Mammary epithelial cell (primary cell): ENCODE measurements at regions of chr20 and their contacts with region 1.

Region 1: DNA sequence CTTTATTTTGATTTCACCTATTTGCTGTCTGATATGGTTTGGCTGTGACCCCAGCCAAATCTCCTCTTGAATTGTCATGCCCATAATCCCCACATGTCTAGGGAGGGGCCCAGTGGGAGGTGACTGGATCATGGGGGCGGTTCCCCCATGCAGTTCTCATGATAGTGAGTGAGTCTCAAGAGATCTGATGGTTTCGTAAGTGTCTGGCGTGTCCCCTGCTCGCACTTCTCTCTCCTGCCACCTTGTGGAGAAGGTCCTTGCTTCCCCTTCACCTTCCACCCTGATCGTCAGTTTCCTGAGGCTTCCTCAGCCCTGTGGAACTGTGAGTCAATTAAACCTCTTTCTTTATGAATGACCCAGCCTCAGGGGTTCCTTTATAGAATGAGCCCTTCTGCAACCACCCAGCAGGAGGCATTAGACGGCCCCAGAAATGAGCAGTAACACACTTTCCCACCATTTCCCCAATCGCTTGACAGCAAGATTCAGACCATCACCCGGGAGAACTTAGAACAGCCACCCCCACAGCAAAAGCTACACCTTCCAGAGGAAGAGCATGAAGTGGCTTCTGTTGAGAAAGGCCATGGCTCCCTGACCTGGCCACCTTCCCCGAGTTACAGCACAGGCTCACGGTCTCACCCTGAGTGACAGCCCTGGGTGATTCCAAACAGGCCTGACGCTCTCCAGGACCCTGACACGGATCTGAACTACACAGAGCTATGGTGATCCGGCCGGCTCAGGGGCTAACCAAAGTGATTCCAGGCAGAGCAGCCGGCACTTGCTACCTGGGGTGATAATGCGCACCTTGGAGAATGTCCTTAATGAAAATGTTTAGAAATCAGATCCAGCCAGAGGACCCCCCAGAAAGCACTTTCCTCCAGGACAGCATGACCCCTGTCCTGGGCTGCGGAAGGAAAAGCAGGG is 131.2 kb upstream of the CDH4 start:
- DNase-seq: peak; percentile 76
- H3K4me3 ChIP-seq: no peak overlapping the region
- H3K27ac ChIP-seq: no peak overlapping the region
- H3K4me1 ChIP-seq: no peaks in the 10 kb centered on the region
- H3K27me3 ChIP-seq: peaks cover under 1% of the 10 kb centered on the region
- CTCF ChIP-seq: peak; percentile 31 to 81

Region 2: GRCh38 chr20:60057123-60057801 is 1063.6 kb before region 1 on chr20:
- CTCF ChIA-PET with region 1: no interaction called
- dilution Hi-C with region 1: no loop called
- in situ Hi-C with region 1: no loop called
- intact Hi-C with region 1: loop called (anchors 1 kb)
- DNase-seq: peak; percentile 65
- H3K4me3 ChIP-seq: peak overlapping the region in 1 of 3 experiments; percentile 58
- H3K27ac ChIP-seq: no peak overlapping the region
- H3K4me1 ChIP-seq: peaks cover 63% of the 10 kb centered on the region
- H3K27me3 ChIP-seq: no peaks in the 10 kb centered on the region
- CTCF ChIP-seq: peak; percentile 90

Region 3: DNA sequence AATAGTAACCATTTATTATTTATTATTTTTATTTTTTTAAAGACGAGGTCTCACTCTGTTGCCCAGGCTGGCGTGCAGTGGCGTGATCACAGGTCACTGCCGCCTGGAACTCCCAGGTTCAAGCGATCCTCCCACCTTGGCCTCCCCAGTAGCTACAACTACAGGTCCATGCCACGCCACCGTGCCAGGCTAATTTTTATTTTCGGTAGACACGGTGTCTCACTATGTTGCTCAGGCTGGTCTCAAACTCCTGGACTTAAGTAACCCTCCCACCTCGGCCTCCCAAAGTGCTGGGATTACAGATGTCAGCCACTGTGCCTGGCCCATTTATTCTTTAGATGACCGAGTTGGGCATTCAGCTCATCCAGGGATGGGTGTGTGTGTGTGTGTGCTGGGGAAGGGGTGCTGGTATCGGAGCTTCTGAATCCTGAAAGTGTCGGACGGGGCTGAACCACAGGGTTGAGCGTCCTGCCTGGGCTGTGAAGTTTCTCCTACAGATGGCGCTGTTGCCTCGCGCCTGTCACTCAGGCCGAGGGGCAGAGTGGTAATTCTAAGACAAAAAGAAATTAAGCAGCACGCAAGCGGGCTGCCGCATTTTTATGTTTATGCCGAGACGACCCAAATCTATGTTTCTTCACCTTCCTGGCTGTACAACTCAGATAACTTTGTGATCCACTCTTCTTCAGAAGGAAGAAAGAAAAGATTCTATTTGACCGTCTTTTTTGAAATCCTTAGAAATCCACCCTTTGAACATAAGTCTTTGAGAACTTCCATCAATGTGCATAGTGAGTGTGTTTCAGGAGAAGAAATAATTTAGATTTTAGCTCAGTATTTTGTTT is 909.9 kb before region 1 on chr20:
- CTCF ChIA-PET with region 1: no interaction called
- dilution Hi-C with region 1: no loop called
- in situ Hi-C with region 1: no loop called
- intact Hi-C with region 1: loop called (anchors 1 kb)
- DNase-seq: peak; percentile 36
- H3K4me3 ChIP-seq: no peak overlapping the region
- H3K27ac ChIP-seq: no peak overlapping the region
- H3K4me1 ChIP-seq: no peaks in the 10 kb centered on the region
- H3K27me3 ChIP-seq: peaks cover 2% of the 10 kb centered on the region
- CTCF ChIP-seq: peak; percentile 94 to 97

Region 4: DNA sequence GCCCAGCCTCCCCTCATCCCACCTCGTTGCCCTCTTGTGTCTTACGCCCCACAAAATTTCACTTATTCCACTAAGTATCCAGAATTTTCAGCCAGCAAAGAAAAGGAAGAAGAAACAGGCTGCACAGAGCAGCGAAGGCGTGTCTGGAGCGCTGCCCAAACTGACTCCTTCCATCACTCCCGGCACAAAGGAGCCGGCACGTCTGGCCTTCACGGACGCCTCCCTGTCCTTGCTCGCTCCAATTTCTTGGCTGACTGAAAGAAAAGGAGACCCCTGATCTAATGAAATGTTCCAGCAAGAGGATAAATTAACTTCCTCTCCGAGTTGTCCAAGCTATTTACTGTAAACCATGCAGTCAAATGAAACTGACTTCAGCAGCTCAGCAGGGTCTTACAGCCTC is 21.0 kb before region 1 on chr20:
- CTCF ChIA-PET with region 1: no interaction called
- dilution Hi-C with region 1: no loop called
- in situ Hi-C with region 1: no loop called
- intact Hi-C with region 1: loop called (anchors 1 kb)
- DNase-seq: no peak
- H3K4me3 ChIP-seq: no peak overlapping the region
- H3K27ac ChIP-seq: no peak overlapping the region
- H3K4me1 ChIP-seq: no peaks in the 10 kb centered on the region
- H3K27me3 ChIP-seq: peaks cover 5% of the 10 kb centered on the region
- CTCF ChIP-seq: no peak

Region 5: DNA sequence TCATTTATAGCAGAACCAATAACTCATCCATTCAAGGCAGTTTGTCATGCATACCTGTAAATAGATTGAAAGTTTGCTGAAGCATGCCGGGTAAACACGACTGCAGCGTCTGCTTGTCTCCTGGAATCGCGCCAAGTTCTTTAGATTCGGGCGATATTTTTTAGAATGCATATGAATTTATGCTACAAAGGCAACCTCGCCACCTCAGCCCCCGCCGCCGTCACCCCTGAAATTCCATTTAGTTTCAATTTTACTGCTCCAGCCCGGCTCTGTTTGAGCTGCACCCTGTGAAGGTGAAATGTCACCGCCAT is 113.9 kb after region 1 on chr20:
- CTCF ChIA-PET with region 1: no interaction called
- dilution Hi-C with region 1: no loop called
- in situ Hi-C with region 1: loop called in 1 of 2 experiments (anchors 10 kb)
- intact Hi-C with region 1: loop called (anchors 1 kb)
- DNase-seq: no peak
- H3K4me3 ChIP-seq: no peak overlapping the region
- H3K27ac ChIP-seq: no peak overlapping the region
- H3K4me1 ChIP-seq: no peaks in the 10 kb centered on the region
- H3K27me3 ChIP-seq: peaks cover 4% of the 10 kb centered on the region
- CTCF ChIP-seq: no peak